ENCODE measurements at regions of chr4 and their contacts with region 1.

Region 1: GRCh38 chr4:38319456-38320342 is 344.3 kb upstream of the KLF3 start:
- DNase-seq: peak; percentile 42
- H3K4me3 ChIP-seq: no peak overlapping the region
- H3K27me3 ChIP-seq: no peaks in the 10 kb centered on the region
- CTCF ChIP-seq: peak; percentile 100

Region 2: GRCh38 chr4:38330321-38330720 is 10.6 kb after region 1 on chr4:
- CTCF ChIA-PET with region 1: interaction called, 11 read pairs
- POLR2A ChIA-PET with region 1: no interaction called
- DNase-seq: no peak
- H3K4me3 ChIP-seq: no peak overlapping the region
- H3K27me3 ChIP-seq: peaks cover 2% of the 10 kb centered on the region; the same call in 1 of the 2 replicates
- CTCF ChIP-seq: no peak

Region 3: GRCh38 chr4:38647101-38647819 is 327.6 kb after region 1 on chr4:
- CTCF ChIA-PET with region 1: no interaction called
- POLR2A ChIA-PET with region 1: no interaction called
- DNase-seq: no peak
- H3K4me3 ChIP-seq: no peak overlapping the region
- H3K27me3 ChIP-seq: no peaks in the 10 kb centered on the region; the same call in 1 of the 2 replicates
- CTCF ChIP-seq: no peak

Region 4: GRCh38 chr4:38663801-38664705 is 344.4 kb after region 1 on chr4 and contains the start of gene KLF3:
- CTCF ChIA-PET with region 1: interaction called, 8 read pairs
- POLR2A ChIA-PET with region 1: interaction called, 14 read pairs
- DNase-seq: peak; percentile 50
- H3K4me3 ChIP-seq: peak within 1 kb of the TSS; percentile 88
- H3K27me3 ChIP-seq: no peaks in the 10 kb centered on the region
- CTCF ChIP-seq: no peak
- polyA plus RNA-seq, gene KLF3: 11.4 and 11.7 TPM in 2 replicates

Region 5: GRCh38 chr4:38675146-38676121 is 355.7 kb after region 1 on chr4:
- CTCF ChIA-PET with region 1: interaction called, 12 read pairs
- POLR2A ChIA-PET with region 1: no interaction called
- DNase-seq: peak; percentile 22
- H3K4me3 ChIP-seq: no peak overlapping the region
- H3K27me3 ChIP-seq: no peaks in the 10 kb centered on the region
- CTCF ChIP-seq: peak; percentile 88

Region 6: GRCh38 chr4:38691251-38692008 is 371.7 kb after region 1 on chr4:
- CTCF ChIA-PET with region 1: interaction called, 3 read pairs
- POLR2A ChIA-PET with region 1: interaction called, 13 read pairs
- DNase-seq: peak; percentile 59
- H3K4me3 ChIP-seq: no peak overlapping the region
- H3K27me3 ChIP-seq: no peaks in the 10 kb centered on the region
- CTCF ChIP-seq: no peak